ENCODE measurements at regions of chr12 and their contacts with region 1.

Region 1: GRCh38 chr12:12622418-12622817 is 10.7 kb downstream of the CREBL2 start:
- DNase-seq: no peak
- H3K4me3 ChIP-seq: no peak overlapping the region
- H3K27ac ChIP-seq: no peak overlapping the region
- H3K4me1 ChIP-seq: no peaks in the 10 kb centered on the region
- H3K27me3 ChIP-seq: no peaks in the 10 kb centered on the region
- CTCF ChIP-seq: no peak

Region 2: GRCh38 chr12:12636641-12637040 is 14.2 kb after region 1 on chr12:
- CTCF ChIA-PET with region 1: interaction called, 21 read pairs
- dilution Hi-C with region 1: no loop called
- in situ Hi-C with region 1: no loop called
- intact Hi-C with region 1: no loop called
- DNase-seq: peak; percentile 29
- H3K4me3 ChIP-seq: no peak overlapping the region
- H3K27ac ChIP-seq: no peak overlapping the region
- H3K4me1 ChIP-seq: peaks cover 6% of the 10 kb centered on the region
- H3K27me3 ChIP-seq: no peaks in the 10 kb centered on the region
- CTCF ChIP-seq: no peak

Measured in mammary epithelial cell (primary cell).